ENCODE measurements at regions of chr6 and their contacts with region 1.

Region 1: DNA sequence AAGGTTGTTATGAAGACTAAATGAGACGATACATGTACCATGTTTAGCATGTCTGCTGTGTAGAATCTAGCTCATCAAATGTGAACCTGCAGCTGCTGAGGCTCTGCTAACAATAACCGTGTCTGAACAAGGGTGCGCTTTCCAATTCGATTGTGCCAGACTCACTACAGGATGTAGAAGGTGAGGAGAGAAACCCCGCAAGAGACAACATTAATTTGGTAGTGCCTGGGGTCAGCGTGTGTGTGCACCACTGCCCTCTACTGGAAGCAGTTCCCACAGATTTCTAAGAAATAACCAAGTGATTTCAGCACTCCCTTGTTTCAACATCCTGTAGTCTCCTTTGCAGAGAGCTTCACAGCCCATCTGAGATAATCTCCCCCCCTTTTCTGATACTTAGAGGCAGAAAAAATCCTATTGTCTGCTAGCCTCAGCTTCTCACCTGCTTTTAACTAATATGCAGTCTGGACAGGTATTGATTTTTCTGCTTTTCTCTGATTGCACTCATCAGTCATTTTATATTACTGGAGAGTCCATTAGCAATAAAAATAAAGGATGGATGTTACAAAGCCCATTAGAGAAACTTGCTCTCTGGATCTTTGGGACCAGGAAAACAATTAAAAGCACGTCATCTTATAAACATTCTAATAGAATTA is 96.7 kb upstream of the BACH2 start:
- DNase-seq: peak; percentile 49 to 73 (median 62)
- H3K4me3 ChIP-seq: no peak overlapping the region
- H3K27ac ChIP-seq: no peak overlapping the region
- H3K4me1 ChIP-seq: peaks cover 1% of the 10 kb centered on the region
- H3K27me3 ChIP-seq: no peaks in the 10 kb centered on the region
- CTCF ChIP-seq: peak; percentile 62 to 79 (median 74)
- EP300 ChIP-seq: no peak
- POLR2A ChIP-seq: no peak

Region 2: GRCh38 chr6:89940225-89941027 is 452.9 kb before region 1 on chr6:
- intact Hi-C with region 1: loop called in 1 of 4 experiments (anchors 5 kb)
- DNase-seq: peak; percentile 67 to 82 (median 75)
- H3K4me3 ChIP-seq: no peak overlapping the region
- H3K27ac ChIP-seq: no peak overlapping the region
- H3K4me1 ChIP-seq: peaks cover 4% of the 10 kb centered on the region
- H3K27me3 ChIP-seq: no peaks in the 10 kb centered on the region
- CTCF ChIP-seq: peak; percentile 28 to 84 (median 75)
- EP300 ChIP-seq: no peak
- POLR2A ChIP-seq: no peak

Region 3: GRCh38 chr6:89970609-89971337 is 422.6 kb before region 1 on chr6:
- intact Hi-C with region 1: loop called in 2 of 4 experiments (anchors 10 kb)
- DNase-seq: peak in 4 of 5 donors; percentile 8 to 41 (median 29)
- H3K4me3 ChIP-seq: no peak overlapping the region
- H3K27ac ChIP-seq: no peak overlapping the region
- H3K4me1 ChIP-seq: no peaks in the 10 kb centered on the region
- H3K27me3 ChIP-seq: no peaks in the 10 kb centered on the region
- CTCF ChIP-seq: peak in 1 of 3 donors; percentile 53
- EP300 ChIP-seq: no peak
- POLR2A ChIP-seq: no peak

Region 4: GRCh38 chr6:90296346-90297114 is 96.8 kb before region 1 on chr6 and contains the start of gene BACH2:
- intact Hi-C with region 1: loop called in 2 of 4 experiments (anchors 10 kb)
- DNase-seq: peak; percentile 93 to 96 (median 96)
- H3K4me3 ChIP-seq: peak within 1 kb of the TSS; percentile 58
- H3K27ac ChIP-seq: peak within 1 kb of the TSS; percentile 94 to 97
- H3K4me1 ChIP-seq: peaks cover 4% of the 10 kb centered on the region
- H3K27me3 ChIP-seq: no peaks in the 10 kb centered on the region
- CTCF ChIP-seq: peak in 1 of 3 donors; percentile 23
- EP300 ChIP-seq: no peak
- POLR2A ChIP-seq: peak; percentile 60
- total RNA-seq, gene BACH2: 7.4 to 19.2 (median 16.1) TPM

Region 5: GRCh38 chr6:90311569-90311968 is 81.8 kb before region 1 on chr6:
- intact Hi-C with region 1: no loop called
- DNase-seq: no peak
- H3K4me3 ChIP-seq: no peak overlapping the region
- H3K27ac ChIP-seq: no peak overlapping the region
- H3K4me1 ChIP-seq: no peaks in the 10 kb centered on the region
- H3K27me3 ChIP-seq: no peaks in the 10 kb centered on the region
- CTCF ChIP-seq: no peak
- EP300 ChIP-seq: no peak
- POLR2A ChIP-seq: no peak

Region 6: GRCh38 chr6:90656325-90656724 is 263.0 kb after region 1 on chr6:
- intact Hi-C with region 1: no loop called
- DNase-seq: no peak
- H3K4me3 ChIP-seq: no peak overlapping the region
- H3K27ac ChIP-seq: no peak overlapping the region
- H3K4me1 ChIP-seq: peaks cover 2% of the 10 kb centered on the region
- H3K27me3 ChIP-seq: no peaks in the 10 kb centered on the region
- CTCF ChIP-seq: no peak
- EP300 ChIP-seq: no peak
- POLR2A ChIP-seq: no peak